WTC11 (cell line): ENCODE measurements at regions of chr6 and their contacts with region 1.

Region 1: DNA sequence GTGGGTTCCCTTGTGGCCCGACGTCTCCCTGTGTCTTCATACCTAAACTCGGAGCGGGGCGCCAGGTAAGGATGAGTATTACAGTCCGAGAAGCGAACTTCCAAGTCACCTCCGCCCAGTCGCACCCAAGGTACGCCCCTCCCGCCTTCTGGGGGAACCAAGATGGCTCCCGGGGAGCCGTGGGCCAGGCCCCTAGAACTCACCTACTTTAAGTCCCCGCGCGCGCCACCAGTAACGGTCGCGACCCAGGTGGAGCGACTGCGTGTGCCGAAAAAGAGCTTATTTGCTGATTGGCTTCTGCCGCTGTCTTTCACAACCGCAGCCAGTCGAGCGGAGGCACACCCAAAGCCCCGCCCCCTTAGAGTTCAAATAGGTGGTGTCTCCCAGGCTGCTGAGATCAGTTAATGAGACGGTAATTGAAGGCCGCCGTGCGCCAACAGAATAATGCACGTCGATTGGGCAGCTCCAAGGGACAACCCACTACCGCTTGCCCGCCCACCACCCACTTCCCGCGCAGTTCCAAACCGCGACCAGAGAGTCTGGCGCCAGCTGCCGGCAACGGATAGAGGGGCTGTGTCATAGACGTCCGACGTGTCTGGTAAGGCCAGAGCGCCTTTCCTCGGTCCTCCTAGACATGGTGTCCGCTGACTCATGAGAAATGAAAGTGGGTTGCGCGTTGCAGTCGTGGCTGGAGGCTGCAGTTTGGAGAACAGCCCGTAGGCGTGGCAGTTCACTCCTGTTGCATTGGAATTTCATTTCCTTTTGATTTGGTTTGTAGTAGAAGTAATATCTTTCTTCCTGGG is at the start of gene MDC1:
- DNase-seq: peak; percentile 99
- ATAC-seq: peak; percentile 77
- H3K4me3 Mint-ChIP-seq: peak within 1 kb of the TSS; percentile 99
- H3K27ac Mint-ChIP-seq: peak within 1 kb of the TSS; percentile 100
- H3K4me1 Mint-ChIP-seq: peaks cover 29% of the 10 kb centered on the region
- H3K27me3 Mint-ChIP-seq: no peaks in the 10 kb centered on the region
- CTCF ChIP-seq: no peak
- total RNA-seq, gene MDC1: 95.9 to 100 TPM (median 97.9 TPM) in 3 replicates

Region 2: GRCh38 chr6:30614843-30615218 is 102.4 kb before region 1 on chr6:
- CTCF ChIA-PET with region 1: interaction called, 4 read pairs
- POLR2A ChIA-PET with region 1: interaction called, 19 read pairs
- DNase-seq: peak; percentile 76
- ATAC-seq: peak; percentile 63
- H3K4me3 Mint-ChIP-seq: peak overlapping the region; percentile 96
- H3K27ac Mint-ChIP-seq: peak overlapping the region; percentile 100
- H3K4me1 Mint-ChIP-seq: peaks cover 42% of the 10 kb centered on the region
- H3K27me3 Mint-ChIP-seq: no peaks in the 10 kb centered on the region; the same call in 1 of the 2 replicates
- CTCF ChIP-seq: no peak

Region 3: GRCh38 chr6:30656513-30656912 is 60.7 kb before region 1 on chr6:
- CTCF ChIA-PET with region 1: no interaction called
- POLR2A ChIA-PET with region 1: no interaction called
- DNase-seq: no peak
- ATAC-seq: no peak; the same call in 1 of the 2 replicates
- H3K4me3 Mint-ChIP-seq: no peak overlapping the region
- H3K27ac Mint-ChIP-seq: no peak overlapping the region
- H3K4me1 Mint-ChIP-seq: no peaks in the 10 kb centered on the region
- H3K27me3 Mint-ChIP-seq: no peaks in the 10 kb centered on the region
- CTCF ChIP-seq: no peak

Region 4: DNA sequence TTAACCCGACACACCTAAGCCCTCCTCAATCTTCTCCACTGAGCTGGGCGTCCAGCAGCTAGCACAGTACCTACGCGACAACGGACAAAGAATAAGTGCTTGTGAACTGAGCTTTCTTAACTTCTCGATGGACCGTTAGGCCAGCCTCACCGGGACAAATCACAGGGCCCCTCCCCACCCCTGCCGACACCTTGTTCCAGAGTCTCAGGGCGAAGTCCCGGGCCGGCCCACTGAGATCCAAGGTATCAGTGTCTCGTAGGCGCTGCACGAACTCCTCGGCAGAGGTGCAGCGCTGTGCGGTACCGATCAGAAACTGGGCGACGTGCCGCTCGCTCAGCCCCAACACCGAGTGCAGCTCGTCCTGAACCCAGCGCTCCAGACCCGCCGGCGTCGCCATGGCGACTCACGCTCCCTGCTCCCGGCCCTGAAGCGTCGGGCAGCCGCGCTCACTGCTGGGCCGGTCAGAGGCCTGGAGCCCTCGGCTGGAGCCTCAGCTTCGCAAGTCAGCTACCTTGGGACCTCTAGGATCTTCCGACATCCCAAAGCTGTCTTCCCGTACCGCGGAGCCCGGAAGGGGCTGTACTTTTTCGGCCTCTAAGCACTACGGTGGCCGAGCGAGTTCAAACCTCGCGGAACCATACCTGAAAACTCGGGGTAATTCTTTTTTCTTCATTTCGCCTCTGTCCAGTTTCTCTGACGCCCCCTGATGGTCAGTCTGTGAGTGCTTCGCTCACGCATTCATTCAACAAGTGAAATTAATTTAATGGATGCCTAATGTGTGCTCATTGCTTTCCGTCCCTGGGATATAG is 44.6 kb before region 1 on chr6 and contains the start of gene DHX16:
- CTCF ChIA-PET with region 1: interaction called, 17 read pairs
- POLR2A ChIA-PET with region 1: interaction called, 8 read pairs
- DNase-seq: peak; percentile 89
- ATAC-seq: peak; percentile 83
- H3K4me3 Mint-ChIP-seq: peak within 1 kb of the TSS; percentile 93
- H3K27ac Mint-ChIP-seq: peak within 1 kb of the TSS; percentile 58
- H3K4me1 Mint-ChIP-seq: peaks cover 8% of the 10 kb centered on the region
- H3K27me3 Mint-ChIP-seq: no peaks in the 10 kb centered on the region
- CTCF ChIP-seq: peak; percentile 40; the same call in 1 of the 2 replicates
- total RNA-seq, gene DHX16: 27.3 to 32.2 TPM (median 30.6 TPM) in 3 replicates

Region 5: DNA sequence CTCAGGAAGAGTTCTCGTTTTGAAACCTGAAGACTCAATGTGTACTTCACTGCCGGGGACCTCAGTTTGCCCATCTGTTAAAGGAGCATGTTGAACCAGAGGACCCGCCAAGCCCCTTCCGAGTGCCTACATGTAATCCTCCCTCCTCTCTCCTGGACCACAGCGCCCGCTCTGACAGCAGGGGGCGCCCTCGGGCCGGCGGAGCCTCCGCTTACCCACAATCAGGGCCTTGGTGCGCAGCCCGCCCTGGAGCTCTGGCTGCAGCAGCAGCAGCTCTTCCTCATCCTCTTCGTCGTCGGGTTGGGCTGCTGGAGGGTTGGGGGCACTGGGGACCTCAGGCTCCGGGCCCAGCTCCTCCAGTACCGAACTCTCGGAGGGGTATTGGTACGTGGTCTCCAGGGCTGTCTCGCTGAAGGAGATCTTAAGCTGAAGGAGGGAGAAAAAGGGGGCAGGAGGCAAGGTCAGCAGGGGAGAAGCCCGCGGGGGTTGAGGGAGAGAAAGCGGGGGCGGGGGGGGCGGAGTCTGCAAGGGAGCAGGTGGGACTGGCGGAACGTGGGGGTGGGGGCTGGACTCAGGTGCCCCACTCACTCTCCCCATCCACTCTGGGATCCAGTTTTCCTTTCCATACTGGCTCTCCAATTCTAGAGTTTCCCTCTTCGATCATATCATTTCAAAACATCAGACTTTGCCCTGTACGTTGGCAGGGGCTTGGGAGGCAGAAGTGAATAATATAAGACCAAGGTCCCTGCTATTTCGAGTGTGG is 38.1 kb before region 1 on chr6:
- CTCF ChIA-PET with region 1: interaction called, 54 read pairs
- POLR2A ChIA-PET with region 1: interaction called, 10 read pairs
- DNase-seq: peak; percentile 94
- ATAC-seq: peak; percentile 83
- H3K4me3 Mint-ChIP-seq: peak overlapping the region; percentile 61
- H3K27ac Mint-ChIP-seq: no peak overlapping the region
- H3K4me1 Mint-ChIP-seq: peaks cover 38% of the 10 kb centered on the region
- H3K27me3 Mint-ChIP-seq: no peaks in the 10 kb centered on the region
- CTCF ChIP-seq: peak; percentile 93

Region 6: DNA sequence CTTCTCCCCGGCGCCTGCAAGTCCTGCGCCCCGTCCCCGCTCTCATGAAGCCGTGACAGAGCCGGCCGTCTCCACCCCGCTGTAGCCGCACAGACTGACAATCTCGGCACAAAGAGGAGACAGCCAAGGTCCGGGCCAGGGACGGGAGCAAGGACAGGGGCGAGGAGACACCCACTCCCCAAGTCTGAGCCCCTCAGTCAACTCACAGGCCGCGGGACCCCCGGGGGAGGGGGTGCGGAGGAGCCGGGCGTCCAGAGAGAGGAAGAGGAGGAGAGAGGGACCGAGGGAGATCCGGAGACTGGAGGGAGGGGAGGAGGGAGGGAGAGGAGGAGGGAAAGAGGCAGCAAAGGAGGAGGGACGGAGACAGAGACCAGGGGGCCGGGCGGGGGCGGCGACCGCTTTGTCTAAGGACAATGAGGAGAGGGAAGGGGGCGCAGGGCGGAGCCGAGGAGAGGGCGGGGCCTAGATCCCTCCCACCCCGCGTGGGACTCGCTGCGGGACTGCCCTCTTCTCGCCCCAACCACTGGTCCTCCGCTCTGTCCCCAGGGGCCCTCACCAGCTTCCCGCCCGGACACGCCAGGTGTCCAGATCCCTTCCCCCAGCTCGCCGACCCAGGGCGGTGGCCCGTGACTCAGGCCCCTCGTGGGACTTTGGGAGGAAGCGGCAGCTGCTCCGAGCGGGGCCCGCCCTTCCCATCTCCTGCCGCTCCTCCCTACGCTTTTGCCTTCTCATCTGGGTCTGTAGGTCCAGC is 30.2 kb before region 1 on chr6:
- CTCF ChIA-PET with region 1: interaction called, 14 read pairs
- POLR2A ChIA-PET with region 1: interaction called, 7 read pairs
- DNase-seq: peak; percentile 92
- ATAC-seq: peak; percentile 43
- H3K4me3 Mint-ChIP-seq: peak overlapping the region; percentile 80
- H3K27ac Mint-ChIP-seq: 0 out of 2 replicates have a peak overlapping the region, but pooled peaks have one; percentile 39
- H3K4me1 Mint-ChIP-seq: peaks cover 75% of the 10 kb centered on the region
- H3K27me3 Mint-ChIP-seq: no peaks in the 10 kb centered on the region
- CTCF ChIP-seq: no peak